Heart left ventricle (tissue), 16 donors: ENCODE measurements at regions of chr3 and their contacts with region 1.

Region 1: DNA sequence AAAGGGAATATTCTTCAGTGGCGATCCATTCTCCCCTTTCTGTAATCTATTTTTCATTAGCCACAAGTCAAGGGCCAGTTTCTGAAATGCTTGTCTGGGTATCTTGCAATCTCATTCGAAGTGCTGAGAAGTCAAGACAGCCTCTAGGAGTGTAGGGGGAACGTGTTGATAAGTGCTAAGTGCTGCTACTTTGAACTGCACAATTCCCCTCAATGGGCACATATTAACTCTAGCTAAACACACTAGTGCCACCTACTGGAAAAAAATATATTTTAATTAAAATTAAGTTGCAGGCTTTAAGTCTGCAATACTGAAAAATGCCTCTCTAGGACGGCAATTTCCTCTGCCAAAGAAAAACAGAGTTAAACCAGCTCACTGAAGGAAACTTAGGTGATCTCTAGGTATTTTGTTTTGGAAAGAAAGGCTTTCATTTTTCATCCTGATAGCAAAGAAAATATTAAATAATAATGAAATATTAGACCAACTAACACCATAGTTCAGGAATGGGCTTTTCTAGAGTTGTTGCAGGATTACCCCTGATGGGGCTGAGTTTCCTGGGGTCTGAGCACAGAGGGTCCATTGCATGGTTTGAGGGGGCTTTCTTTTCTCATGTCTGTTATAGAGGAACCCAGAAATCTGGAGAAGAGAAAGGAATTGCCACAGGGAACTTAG is 181.9 kb upstream of the KBTBD8 start:
- DNase-seq: no peak
- ATAC-seq: peak; percentile 58 to 92 (median 82)
- H3K4me3 ChIP-seq: no peak overlapping the region
- H3K27ac ChIP-seq: no peak overlapping the region
- H3K4me1 ChIP-seq: peaks cover 0 to 3% (median 0%) of the 10 kb centered on the region in 12 donors
- H3K27me3 ChIP-seq: no peaks in the 10 kb centered on the region
- CTCF ChIP-seq: peak; percentile 45 to 77 (median 68)
- POLR2A ChIP-seq: no peak

Region 2: GRCh38 chr3:66253790-66254620 is 562.2 kb before region 1 on chr3:
- intact Hi-C with region 1: loop called in 8 of 10 experiments (anchors 2 to 5 kb)
- DNase-seq: no peak
- ATAC-seq: no peak
- H3K4me3 ChIP-seq: no peak overlapping the region
- H3K27ac ChIP-seq: no peak overlapping the region
- H3K4me1 ChIP-seq: peaks cover 0 to 4% (median 0%) of the 10 kb centered on the region in 12 donors
- H3K27me3 ChIP-seq: no peaks in the 10 kb centered on the region
- CTCF ChIP-seq: peak; percentile 61 to 90 (median 78)
- POLR2A ChIP-seq: no peak

Region 3: DNA sequence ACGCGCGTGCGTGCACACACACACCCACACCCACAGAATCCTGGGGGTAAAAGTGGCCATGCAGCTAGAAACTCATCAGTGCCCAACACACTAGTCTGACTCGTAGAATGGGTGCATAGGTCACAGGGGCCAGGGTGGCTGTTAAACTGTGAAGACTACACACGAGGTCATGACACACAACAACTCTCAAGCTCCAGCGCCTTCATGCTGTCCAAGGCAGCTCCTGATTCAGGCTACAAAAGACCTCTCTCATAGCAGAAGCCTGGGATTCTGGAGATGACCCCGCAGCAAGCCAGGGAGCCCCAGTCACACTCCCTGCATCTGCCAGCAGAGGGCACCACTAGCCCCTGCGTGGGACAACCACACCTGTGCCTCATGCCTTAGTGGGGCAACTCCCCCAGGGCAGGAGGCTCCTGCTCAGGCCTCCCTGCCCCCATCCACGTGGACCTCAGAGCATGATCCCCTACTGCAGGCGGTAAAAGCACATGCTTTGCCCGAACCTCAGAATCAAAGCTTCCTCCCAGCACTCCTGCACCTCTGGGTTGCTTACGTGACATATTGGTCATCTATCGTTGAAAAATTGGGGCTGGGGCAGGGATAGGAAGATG is 408.5 kb before region 1 on chr3:
- intact Hi-C with region 1: loop called (anchors 1 to 5 kb)
- DNase-seq: peak; percentile 71 to 87 (median 77)
- ATAC-seq: peak in 3 of 4 donors; percentile 48 to 57 (median 57)
- H3K4me3 ChIP-seq: no peak overlapping the region
- H3K27ac ChIP-seq: peak overlapping the region in 5 of 12 donors; percentile 57 to 82 (median 73)
- H3K4me1 ChIP-seq: peaks cover 4 to 90% (median 48%) of the 10 kb centered on the region in 12 donors
- H3K27me3 ChIP-seq: no peaks in the 10 kb centered on the region
- CTCF ChIP-seq: peak; percentile 89 to 96 (median 93)
- POLR2A ChIP-seq: no peak

Region 4: DNA sequence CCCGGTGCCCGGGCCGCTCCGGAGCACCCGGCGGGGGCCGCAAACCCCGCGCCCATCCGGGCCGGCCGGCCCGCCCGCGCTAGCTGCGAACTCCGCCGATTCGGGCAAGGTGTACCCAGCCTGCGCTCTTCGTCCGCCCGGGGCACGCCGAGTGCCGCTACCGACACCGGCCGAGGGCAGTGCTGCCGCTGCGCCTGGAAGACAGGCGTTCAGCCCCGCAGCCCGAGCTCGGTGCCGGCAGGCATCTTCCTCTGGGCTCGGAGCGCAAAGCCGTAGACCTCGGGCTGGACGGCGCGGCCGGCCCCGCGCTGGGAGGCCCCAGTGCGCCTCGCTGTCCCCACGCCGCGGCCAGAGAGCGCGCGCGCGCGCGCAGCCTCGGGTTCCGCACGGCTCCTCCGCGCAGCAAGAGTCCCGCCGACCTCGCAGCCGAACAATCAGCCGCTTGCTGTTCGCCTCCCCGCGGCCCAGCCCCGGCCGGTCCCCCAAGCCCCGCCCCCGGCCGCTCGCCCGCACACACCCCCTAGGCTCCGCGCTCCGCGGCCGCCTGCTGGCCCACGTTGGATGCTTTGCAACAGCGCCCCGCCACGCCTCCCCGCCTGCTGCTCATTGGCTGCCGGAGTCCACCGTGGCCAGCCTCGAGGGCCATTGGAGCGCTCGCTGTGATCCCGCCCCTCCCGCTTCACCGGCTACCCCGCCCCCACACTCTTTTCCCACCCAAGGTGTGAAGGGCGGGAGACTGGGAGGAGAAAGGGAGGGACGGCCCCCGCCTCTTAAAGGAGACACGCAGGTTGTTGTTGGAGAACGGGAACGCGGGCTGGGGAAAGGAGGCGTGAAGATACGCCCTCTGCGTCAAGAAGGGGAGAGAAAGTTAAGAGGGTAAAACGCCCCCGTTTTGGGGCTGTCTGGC is 315.4 kb before region 1 on chr3 and contains the start of gene LRIG1:
- intact Hi-C with region 1: loop called in 7 of 10 experiments (anchors 5 to 10 kb)
- DNase-seq: peak; percentile 100
- ATAC-seq: peak; percentile 96 to 97 (median 97)
- H3K4me3 ChIP-seq: peak within 1 kb of the TSS; percentile 81 to 98 (median 92)
- H3K27ac ChIP-seq: peak within 1 kb of the TSS; percentile 90 to 98 (median 94)
- H3K4me1 ChIP-seq: peaks cover 0 to 45% (median 36%) of the 10 kb centered on the region in 12 donors
- H3K27me3 ChIP-seq: no peaks in the 10 kb centered on the region
- CTCF ChIP-seq: peak; percentile 20 to 69 (median 51)
- POLR2A ChIP-seq: peak; percentile 33 to 86
- total RNA-seq, gene LRIG1: 71.0 to 161 (median 98.3) TPM

Region 5: GRCh38 chr3:66527246-66527645 is 289.0 kb before region 1 on chr3:
- intact Hi-C with region 1: loop called in 1 of 10 experiments (anchors 10 kb)
- DNase-seq: no peak
- ATAC-seq: no peak
- H3K4me3 ChIP-seq: no peak overlapping the region
- H3K27ac ChIP-seq: no peak overlapping the region
- H3K4me1 ChIP-seq: no peaks in the 10 kb centered on the region
- H3K27me3 ChIP-seq: no peaks in the 10 kb centered on the region
- CTCF ChIP-seq: no peak
- POLR2A ChIP-seq: no peak

Region 6: DNA sequence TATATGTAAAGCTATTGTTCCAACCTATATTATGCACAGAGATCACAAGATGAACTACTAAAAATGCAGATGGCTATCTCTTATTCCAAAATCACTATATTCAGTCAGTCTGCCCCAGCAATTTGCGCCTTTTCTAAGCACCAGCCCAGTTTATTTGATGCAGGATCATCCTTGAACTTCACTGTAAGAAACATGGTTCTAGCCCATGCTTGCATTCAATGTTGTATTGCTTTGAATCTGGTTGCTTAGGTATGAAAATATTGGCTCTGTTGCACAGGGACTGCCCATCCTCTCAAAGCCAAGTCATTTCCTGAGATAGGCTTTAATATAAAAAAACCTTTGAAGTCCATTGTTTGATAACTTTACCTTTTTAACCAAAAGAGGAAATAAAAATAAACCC is 144.9 kb before region 1 on chr3:
- intact Hi-C with region 1: no loop called
- DNase-seq: no peak
- ATAC-seq: peak in 2 of 4 donors; percentile 39 to 79
- H3K4me3 ChIP-seq: no peak overlapping the region
- H3K27ac ChIP-seq: no peak overlapping the region
- H3K4me1 ChIP-seq: peaks cover 0 to 6% (median 0%) of the 10 kb centered on the region in 12 donors
- H3K27me3 ChIP-seq: no peaks in the 10 kb centered on the region
- CTCF ChIP-seq: no peak
- POLR2A ChIP-seq: no peak